ENCODE measurements at regions of chr22 and their contacts with region 1.

Region 1: DNA sequence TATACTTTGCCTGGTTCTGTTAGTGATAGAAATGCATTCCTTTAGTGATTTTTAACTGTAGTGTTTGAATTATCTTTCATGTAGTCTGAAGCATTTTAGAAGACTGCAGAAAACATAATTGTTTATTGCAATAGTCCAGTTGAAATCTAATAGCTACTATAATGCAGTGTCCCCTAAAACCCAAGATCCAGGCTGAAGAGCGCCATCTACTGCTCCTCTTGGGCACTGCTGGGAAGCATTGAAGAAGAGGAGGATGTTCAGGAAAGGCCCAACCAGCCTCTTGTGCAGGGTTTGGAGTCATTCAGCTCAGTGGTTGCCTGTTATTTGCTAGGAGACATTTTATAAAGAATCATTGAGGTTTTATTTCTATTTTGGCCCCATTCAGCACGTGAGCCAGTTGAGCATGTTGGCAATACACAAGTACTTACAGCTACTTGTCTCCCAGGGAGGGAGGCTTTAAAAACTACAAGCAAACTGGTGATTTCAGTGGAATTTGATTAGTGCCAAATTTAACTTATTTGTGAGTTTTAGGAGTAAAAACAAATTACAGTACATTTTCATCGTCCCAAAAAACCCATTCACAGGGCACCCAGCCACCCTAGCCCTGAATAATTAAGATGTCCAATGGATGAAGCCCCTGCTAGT is 74.9 kb upstream of the HORMAD2 start:
- DNase-seq: peak; percentile 64 to 92 (median 77)
- H3K4me3 ChIP-seq: no peak overlapping the region
- H3K27ac ChIP-seq: no peak overlapping the region
- H3K4me1 ChIP-seq: peaks cover 0 to 25% of the 10 kb centered on the region in 2 donors
- H3K27me3 ChIP-seq: no peaks in the 10 kb centered on the region
- CTCF ChIP-seq: peak; percentile 88 to 97 (median 91)
- POLR2A ChIP-seq: no peak

Region 2: GRCh38 chr22:29520851-29521250 is 484.5 kb before region 1 on chr22:
- intact Hi-C with region 1: no loop called
- DNase-seq: peak; percentile 45 to 75 (median 64)
- H3K4me3 ChIP-seq: no peak overlapping the region
- H3K27ac ChIP-seq: peak overlapping the region; percentile 34 to 80 (median 53)
- H3K4me1 ChIP-seq: peaks cover 12 to 19% of the 10 kb centered on the region in 2 donors
- H3K27me3 ChIP-seq: no peaks in the 10 kb centered on the region
- CTCF ChIP-seq: no peak
- POLR2A ChIP-seq: peak in 1 of 2 donors; percentile 62

Region 3: DNA sequence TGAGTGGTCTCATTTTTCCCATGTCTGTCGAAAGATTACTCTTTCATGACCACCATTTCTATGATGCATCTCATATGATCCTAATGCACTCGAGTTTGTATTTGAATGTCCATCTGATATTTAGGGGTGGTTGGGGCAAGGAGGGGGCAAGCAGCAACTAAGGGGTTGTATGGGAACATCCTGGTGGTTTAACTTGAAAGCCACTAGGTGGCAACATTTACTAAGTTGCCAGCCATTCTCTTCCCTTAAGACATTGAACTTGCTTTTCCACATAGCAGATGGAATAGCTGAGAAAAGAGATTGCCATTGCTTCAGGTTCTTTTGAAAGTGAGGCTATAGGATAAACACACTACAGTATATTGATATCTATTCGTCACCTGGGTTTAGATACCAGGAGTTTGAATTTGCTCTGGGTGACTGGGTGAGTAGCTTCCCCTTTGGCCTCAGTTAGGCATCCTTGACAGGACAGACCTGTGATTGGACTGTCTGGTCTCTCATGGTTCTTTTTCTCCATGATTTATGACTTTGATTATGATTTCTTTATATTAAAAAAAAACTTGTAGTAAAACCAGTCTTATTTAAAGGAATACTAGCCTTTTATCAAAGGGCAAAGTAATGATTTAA is 369.5 kb before region 1 on chr22:
- intact Hi-C with region 1: loop called in 1 of 2 experiments (anchors 10 kb)
- DNase-seq: peak in 1 of 7 donors; percentile 13
- H3K4me3 ChIP-seq: no peak overlapping the region
- H3K27ac ChIP-seq: no peak overlapping the region
- H3K4me1 ChIP-seq: peaks cover 0 to 29% of the 10 kb centered on the region in 2 donors
- H3K27me3 ChIP-seq: no peaks in the 10 kb centered on the region
- CTCF ChIP-seq: peak; percentile 40 to 68 (median 63)
- POLR2A ChIP-seq: no peak

Region 4: GRCh38 chr22:29701155-29701999 is 304.0 kb before region 1 on chr22:
- intact Hi-C with region 1: loop called in 1 of 2 experiments (anchors 10 kb)
- DNase-seq: no peak
- H3K4me3 ChIP-seq: no peak overlapping the region
- H3K27ac ChIP-seq: peak overlapping the region in 3 of 5 donors; percentile 6 to 27 (median 12)
- H3K4me1 ChIP-seq: peaks cover 18 to 45% of the 10 kb centered on the region in 2 donors
- H3K27me3 ChIP-seq: no peaks in the 10 kb centered on the region
- CTCF ChIP-seq: no peak
- POLR2A ChIP-seq: no peak

Region 5: DNA sequence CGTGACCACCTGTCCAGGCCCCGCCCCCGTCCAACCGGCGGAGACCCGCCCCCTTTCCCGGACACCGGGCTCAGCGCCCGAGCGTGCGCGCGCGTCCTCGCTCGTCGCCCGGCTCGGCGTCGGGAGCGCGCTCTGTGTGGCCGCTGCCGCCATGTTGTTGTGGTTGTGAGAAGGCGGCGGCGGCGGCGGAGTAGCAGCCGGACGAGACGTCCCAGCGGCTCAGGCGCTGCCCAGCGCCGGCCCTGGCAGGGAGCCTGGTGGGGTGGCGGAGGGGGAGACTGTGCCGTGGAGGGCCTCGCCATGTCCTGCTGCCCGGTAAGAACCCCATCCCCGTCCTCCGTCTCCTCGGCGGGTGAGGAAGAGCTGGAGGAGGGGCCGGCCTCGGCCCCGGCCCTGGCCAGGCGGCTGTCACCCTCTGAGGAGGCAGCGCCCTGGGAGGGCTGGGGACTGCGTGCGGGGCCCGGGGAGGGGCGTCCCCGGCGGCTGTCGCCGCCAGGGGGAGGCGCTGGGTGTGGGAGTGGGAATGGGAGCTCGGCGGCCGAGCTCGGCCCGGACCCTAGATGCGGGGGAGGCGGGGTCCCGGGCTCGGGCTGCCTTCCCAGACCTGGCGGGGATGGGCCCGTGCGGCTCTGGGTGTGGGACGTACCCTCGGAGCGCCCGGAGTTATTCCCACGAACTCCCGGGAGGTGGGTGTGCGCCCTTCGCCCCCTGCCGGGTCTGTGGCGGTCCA is 122.1 kb before region 1 on chr22 and contains the start of gene MTMR3:
- intact Hi-C with region 1: loop called in 1 of 2 experiments (anchors 10 kb)
- DNase-seq: peak; percentile 92 to 97 (median 95)
- H3K4me3 ChIP-seq: peak within 1 kb of the TSS; percentile 65 to 96 (median 89)
- H3K27ac ChIP-seq: peak within 1 kb of the TSS; percentile 91 to 97 (median 95)
- H3K4me1 ChIP-seq: peaks cover 14 to 44% of the 10 kb centered on the region in 2 donors
- H3K27me3 ChIP-seq: no peaks in the 10 kb centered on the region
- CTCF ChIP-seq: peak; percentile 23 to 52 (median 44)
- POLR2A ChIP-seq: peak; percentile 67 to 80
- total RNA-seq, gene MTMR3: 36.9 to 80.7 (median 50.8) TPM

Region 6: DNA sequence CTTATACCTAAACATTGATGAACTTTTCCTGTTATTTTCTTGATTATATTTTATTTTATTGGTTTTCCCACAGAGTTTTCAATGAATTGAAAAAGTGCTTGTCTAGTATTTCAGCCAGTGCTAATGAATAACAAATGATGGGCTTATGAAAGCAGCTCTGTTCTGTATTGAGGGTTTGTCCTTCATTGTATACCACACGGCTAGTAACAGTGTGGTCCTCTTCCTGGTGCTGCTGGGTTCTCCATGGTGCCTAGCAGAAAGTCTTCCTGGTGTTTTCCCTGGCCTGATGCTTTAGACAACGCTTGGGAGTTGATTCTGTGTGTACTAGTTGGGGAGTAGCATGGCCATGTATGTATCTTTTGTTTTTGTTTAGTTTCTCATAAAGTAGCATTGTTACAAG is 33.2 kb before region 1 on chr22:
- intact Hi-C with region 1: no loop called
- DNase-seq: no peak
- H3K4me3 ChIP-seq: no peak overlapping the region
- H3K27ac ChIP-seq: no peak overlapping the region
- H3K4me1 ChIP-seq: peaks cover 4 to 17% of the 10 kb centered on the region in 2 donors
- H3K27me3 ChIP-seq: no peaks in the 10 kb centered on the region
- CTCF ChIP-seq: no peak
- POLR2A ChIP-seq: no peak

Region 7: GRCh38 chr22:30078320-30079311 is 73.3 kb after region 1 on chr22:
- intact Hi-C with region 1: no loop called
- DNase-seq: peak in 1 of 7 donors; percentile 4
- H3K4me3 ChIP-seq: no peak overlapping the region
- H3K27ac ChIP-seq: no peak overlapping the region
- H3K4me1 ChIP-seq: no peaks in the 10 kb centered on the region
- H3K27me3 ChIP-seq: peaks cover 4% of the 10 kb centered on the region
- CTCF ChIP-seq: no peak
- POLR2A ChIP-seq: no peak